Right ventricle myocardium inferior (tissue), 1 donor: ENCODE measurements at regions of chr9 and their contacts with region 1.

Region 1: GRCh38 chr9:546797-547223 is 294.7 kb upstream of the DMRT1 start:
- DNase-seq: no peak
- ATAC-seq: peak; percentile 82

Region 2: DNA sequence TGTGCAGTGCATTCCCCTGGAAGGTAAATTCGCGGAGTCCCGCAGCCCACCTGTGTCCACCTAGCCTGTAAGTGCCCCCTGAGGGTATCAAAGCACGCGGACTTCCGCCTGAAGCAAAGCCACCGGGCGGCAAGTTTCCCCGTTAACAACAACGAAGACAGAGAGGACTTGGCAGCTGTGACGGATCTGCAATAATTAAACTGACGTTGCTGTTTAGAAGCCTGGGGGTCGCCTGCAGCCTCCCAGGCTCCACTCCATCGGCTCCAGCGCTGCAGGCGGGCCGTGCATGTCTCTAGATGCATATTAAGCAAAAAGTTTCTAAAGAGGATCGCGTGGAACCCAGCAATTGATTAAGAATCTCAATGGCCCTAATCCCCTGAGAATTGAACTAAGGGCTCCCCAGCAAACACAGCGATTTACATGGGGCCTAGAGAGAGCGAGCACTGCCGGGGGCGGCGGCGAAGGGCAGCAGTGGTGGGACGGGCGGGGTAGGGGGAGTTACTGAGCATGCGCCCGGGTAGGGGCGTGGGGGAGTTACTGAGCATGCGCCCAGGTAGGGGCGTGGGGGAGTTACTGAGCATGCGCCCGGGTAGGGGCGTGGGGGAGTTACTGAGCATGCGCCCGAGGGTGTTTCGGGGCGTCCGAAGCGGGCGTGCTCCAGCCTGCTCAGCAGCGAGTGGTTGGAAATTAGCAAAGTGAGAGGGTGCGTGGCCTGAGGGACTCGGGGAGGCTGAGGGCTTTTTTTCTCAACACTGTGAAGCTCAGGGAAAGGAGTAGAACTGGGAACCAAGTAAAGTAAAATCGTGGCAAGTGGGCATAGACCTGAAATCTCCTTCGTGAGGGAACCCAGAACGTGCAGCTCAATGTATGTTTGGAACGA is 76.9 kb before region 1 on chr9:
- intact Hi-C with region 1: loop called (anchors 5 kb)
- DNase-seq: peak; percentile 93
- ATAC-seq: peak; percentile 99

Region 3: DNA sequence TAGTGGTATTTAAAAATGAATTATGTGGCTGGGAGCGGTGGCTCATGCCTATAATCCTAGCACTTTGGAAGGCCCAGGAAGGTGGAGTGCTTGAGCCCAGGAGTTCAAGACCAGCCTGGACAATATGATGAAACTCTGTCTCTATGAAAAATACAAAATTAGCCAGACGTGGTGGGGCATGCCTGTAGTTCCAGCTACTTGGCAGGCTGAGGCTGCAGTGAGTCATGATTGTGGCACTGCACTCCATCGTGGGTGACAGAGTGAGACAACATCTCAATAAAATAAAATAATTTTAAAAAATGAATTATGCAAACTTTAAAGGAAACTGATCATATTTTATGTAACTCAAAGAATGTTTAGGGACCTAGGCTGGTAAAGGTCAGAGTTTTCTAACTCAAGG is 16.1 kb before region 1 on chr9:
- intact Hi-C with region 1: no loop called
- DNase-seq: no peak
- ATAC-seq: peak; percentile 77

Region 4: DNA sequence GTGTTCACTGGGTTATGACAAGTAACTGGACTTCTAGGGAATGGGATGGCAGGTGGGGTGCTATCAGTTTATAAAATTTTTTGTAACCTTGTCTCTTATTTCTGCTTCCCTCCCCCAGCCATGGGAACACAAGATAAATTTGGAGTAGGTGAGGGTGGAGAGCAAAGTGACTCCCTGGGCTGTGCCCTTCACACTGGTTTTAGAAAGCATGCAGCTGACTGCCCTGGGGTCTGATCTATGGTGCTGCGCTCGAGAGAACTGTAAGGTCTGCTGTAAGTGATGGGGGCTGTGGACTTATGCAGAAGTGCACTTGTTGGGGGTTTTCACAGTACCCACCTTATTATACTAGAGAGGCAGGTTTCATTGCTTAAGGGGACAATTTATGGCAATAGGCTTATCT is 47.0 kb after region 1 on chr9:
- intact Hi-C with region 1: loop called (anchors 2 kb)
- DNase-seq: no peak
- ATAC-seq: peak; percentile 54

Region 5: DNA sequence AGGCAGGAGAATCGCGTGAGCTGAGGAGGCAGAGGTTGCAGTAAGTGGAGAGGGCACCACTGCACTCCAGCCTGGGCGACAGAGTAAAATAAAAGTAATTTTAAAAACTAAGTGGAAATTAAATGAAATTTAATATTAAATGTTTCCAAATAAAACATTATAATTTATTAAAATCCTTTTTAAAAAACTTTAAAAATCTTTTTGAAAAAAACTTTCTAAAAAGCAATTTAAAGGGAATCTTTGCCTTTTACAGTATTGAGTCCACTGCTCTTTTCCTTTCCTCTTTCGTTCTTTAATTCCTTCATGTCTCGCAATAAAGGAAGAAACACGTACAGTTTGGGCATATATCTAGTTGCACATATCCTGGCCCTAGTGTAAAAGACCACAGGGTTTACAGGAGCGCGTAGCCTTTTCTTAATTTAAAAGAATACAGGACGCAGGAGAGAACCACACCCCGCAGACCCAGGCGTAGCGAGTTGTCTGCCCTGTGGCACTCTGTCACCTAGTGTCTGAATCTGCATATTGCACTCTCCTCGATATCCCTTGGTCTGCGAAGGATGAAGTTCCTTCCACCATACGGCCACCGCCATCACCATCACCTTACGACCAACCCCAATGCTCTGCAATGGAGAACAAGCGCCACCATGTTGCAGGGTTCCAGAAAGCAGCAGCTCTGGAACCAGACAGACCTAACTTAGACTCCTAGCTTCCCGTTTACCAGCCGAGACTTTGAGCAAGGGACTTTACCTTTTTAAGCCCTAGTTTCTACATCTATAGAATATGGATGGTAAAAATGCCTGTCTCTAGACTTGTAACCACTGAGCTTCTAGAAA is 217.1 kb after region 1 on chr9:
- intact Hi-C with region 1: loop called (anchors 10 kb)
- DNase-seq: no peak
- ATAC-seq: peak; percentile 95